Activated CD4-positive, alpha-beta T cell treated with anti-CD3 and anti-CD28 coated beads for 36 hours (primary cell): ENCODE measurements at regions of chr5 and their contacts with region 1.

Region 1: DNA sequence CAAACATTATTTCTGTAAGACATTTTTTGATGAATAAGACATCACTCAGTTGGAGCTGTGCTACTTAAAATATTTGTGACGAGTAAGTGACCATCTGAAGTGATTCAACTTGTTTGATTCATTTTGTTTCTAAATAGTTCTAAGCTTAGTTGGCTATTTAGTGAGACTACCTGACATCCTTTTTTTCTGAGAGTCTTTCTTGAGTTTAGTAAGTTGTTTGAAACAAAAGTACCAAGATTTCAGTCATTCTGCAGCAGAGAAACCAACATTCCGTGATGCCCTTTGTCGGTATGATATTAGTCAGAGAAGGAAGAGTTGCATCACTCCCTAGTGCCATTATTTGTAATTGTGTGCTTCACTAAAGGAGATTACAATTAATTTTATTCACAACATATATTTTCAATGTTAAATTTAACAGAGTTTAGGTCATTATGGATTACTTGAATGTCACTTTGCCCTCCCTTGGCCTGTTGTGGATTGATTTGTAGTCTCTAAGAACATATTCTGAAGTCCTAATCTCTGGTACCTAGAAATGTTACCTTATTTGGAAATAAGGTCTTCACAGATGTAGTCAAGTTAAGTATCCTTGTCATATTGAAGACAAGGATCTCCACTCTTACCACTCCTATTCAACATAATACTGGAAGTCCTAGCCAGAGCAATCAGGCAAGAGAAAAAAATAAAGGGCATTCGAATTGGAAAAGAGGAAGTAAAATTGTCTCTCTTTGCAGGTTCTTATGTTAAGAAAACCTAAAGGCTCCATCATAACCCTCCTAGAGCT is 212.2 kb downstream of the PCSK1 start:
- DNase-seq: peak; percentile 43
- ATAC-seq: peak; percentile 89
- H3K4me3 Mint-ChIP-seq: no peak overlapping the region
- H3K27ac Mint-ChIP-seq: peak overlapping the region; percentile 77
- H3K4me1 Mint-ChIP-seq: peaks cover 19% of the 10 kb centered on the region
- H3K27me3 Mint-ChIP-seq: peaks cover 13% of the 10 kb centered on the region

Region 2: DNA sequence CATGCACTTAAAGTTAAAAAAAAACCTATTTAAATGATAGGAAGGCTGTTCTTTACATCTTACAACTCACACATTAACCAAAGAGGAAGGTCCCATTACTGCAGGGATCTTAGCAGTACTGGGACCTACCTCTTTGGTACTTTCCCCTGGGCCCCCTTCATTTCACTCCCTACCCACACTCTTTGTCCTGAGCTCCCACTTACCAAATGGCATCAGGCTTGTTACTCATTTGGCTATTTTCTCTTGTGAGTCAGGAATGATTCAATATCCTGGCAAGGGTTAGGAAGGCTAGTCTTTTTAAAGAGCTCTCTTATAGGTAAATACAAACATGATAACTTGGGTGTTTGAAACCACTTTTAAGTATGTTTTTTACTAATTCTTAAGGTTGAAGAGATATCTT is 141.7 kb before region 1 on chr5:
- CTCF ChIA-PET with region 1: no interaction called
- POLR2A ChIA-PET with region 1: no interaction called
- intact Hi-C with region 1: loop called in 1 of 2 experiments (anchors 1 kb)
- DNase-seq: peak; percentile 66
- ATAC-seq: peak; percentile 97
- H3K4me3 Mint-ChIP-seq: no peak overlapping the region
- H3K27ac Mint-ChIP-seq: peak overlapping the region; percentile 83
- H3K4me1 Mint-ChIP-seq: peaks cover 42% of the 10 kb centered on the region
- H3K27me3 Mint-ChIP-seq: peaks cover 18% of the 10 kb centered on the region

Region 3: GRCh38 chr5:96595300-96596090 is 374.7 kb after region 1 on chr5:
- CTCF ChIA-PET with region 1: no interaction called
- POLR2A ChIA-PET with region 1: no interaction called
- intact Hi-C with region 1: loop called in 1 of 2 experiments (anchors 5 kb)
- DNase-seq: peak; percentile 32
- ATAC-seq: peak; percentile 61
- H3K4me3 Mint-ChIP-seq: no peak overlapping the region
- H3K27ac Mint-ChIP-seq: no peak overlapping the region
- H3K4me1 Mint-ChIP-seq: peaks cover 17% of the 10 kb centered on the region
- H3K27me3 Mint-ChIP-seq: peaks cover 14% of the 10 kb centered on the region